Right cardiac atrium (tissue), 5 donors: ENCODE measurements at regions of chr15 and their contacts with region 1.

Region 1: DNA sequence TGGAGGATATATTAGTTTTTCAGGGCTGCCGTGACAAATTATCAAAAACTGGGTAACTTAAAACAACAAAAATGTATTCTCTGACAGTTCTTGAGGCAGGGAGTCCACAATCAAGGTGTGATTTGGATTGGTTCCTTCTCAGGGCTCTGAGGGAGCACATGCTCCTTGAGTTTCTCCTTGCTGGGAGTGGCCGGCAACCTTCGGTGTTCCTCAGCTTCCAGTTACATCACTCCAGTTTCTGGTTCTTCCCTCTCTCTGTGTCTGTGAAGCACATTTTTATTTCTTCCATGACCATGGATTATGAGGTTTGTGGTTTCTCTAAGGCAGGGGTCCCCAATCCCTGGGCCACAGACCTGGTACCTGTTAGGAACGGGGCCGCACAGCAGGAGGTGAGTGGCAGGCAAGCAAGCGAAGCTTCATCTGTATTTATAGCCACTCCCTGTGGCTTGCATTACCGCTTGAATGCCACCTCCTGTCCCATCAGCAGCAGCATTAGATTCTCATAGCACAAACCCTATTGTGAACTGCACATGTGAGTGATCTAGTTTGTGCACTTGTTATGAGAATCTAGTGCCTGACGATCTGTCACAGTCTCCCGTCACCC is 24.3 kb downstream of the LRRC28 start:
- DNase-seq: no peak
- ATAC-seq: no peak
- H3K4me3 ChIP-seq: no peak overlapping the region
- H3K27ac ChIP-seq: no peak overlapping the region
- H3K4me1 ChIP-seq: no peaks in the 10 kb centered on the region
- H3K27me3 ChIP-seq: no peaks in the 10 kb centered on the region

Region 2: GRCh38 chr15:99749386-99749785 is 473.8 kb after region 1 on chr15:
- intact Hi-C with region 1: loop called in 3 of 4 experiments (anchors 5 to 10 kb)
- DNase-seq: peak; percentile 56 to 77 (median 73)
- ATAC-seq: peak; percentile 71 to 90
- H3K4me3 ChIP-seq: no peak overlapping the region
- H3K27ac ChIP-seq: no peak overlapping the region
- H3K4me1 ChIP-seq: no peaks in the 10 kb centered on the region
- H3K27me3 ChIP-seq: no peaks in the 10 kb centered on the region

Region 3: DNA sequence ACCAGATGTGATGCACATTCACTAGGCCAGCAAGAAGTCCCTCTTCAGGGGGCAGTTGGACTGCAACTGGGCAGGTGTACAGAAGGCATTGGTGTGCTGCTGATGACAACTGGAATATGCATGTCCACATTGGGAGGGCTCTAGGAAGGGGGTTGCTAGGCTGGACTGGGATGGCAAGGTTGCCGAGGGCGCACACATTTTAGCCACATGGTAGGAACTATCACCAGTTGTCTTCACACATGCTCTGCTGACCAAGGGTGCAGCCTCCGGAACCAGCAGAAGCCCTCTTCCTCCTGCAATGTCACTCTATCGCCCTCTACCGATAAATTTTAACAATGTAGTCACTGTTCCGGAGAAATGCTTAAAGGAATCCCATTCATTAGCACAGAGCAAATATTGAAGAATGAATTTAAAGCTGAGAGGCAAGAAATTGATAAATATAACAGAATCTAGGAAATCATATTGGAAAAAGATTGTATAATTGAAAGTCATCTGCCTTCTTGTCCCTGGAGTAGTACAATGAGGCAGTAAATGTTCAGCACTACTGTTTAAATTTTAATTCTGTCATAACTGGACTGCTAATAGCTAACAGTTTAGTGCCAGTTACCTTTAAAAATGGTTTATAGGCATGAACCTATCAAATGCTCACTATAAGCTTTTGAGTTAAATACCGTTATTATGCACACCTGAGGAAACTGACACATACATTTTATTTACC is 480.2 kb after region 1 on chr15:
- intact Hi-C with region 1: loop called in 3 of 4 experiments (anchors 5 to 10 kb)
- DNase-seq: peak; percentile 44 to 73 (median 71)
- ATAC-seq: peak; percentile 81 to 86
- H3K4me3 ChIP-seq: no peak overlapping the region
- H3K27ac ChIP-seq: no peak overlapping the region
- H3K4me1 ChIP-seq: no peaks in the 10 kb centered on the region
- H3K27me3 ChIP-seq: no peaks in the 10 kb centered on the region

Region 4: GRCh38 chr15:99909592-99910295 is 634.1 kb after region 1 on chr15:
- intact Hi-C with region 1: loop called in 1 of 4 experiments (anchors 10 kb)
- DNase-seq: peak in 1 of 3 donors; percentile 50
- ATAC-seq: peak; percentile 58 to 78
- H3K4me3 ChIP-seq: no peak overlapping the region
- H3K27ac ChIP-seq: no peak overlapping the region
- H3K4me1 ChIP-seq: no peaks in the 10 kb centered on the region
- H3K27me3 ChIP-seq: no peaks in the 10 kb centered on the region